Common myeloid progenitor, CD34-positive (primary cell): ENCODE measurements at regions of chr14 and their contacts with region 1.

Region 1: DNA sequence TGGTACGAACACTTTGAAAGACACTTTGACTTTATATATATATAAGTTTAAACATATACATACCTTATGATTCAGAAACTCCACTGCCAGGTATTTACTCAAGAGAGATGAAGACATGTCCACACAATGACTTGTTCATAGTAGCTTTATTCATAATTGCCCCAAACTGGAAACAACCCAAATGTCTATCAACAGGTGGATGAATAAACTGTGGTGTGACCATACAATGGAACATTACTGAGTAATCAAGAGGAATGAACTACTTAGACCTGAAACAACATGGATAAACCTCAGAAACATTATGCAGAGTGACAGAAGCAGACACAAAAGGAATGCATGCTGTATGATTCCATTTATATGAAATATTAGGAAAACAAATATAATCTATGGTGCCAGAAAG is 71.1 kb downstream of the PPP1R36 start:
- DNase-seq: no peak
- H3K4me3 ChIP-seq: no peak overlapping the region
- H3K27ac ChIP-seq: no peak overlapping the region
- H3K4me1 ChIP-seq: peaks cover 0 to 4% (median 0%) of the 10 kb centered on the region in 4 experiments
- H3K27me3 ChIP-seq: no peaks in the 10 kb centered on the region

Region 2: DNA sequence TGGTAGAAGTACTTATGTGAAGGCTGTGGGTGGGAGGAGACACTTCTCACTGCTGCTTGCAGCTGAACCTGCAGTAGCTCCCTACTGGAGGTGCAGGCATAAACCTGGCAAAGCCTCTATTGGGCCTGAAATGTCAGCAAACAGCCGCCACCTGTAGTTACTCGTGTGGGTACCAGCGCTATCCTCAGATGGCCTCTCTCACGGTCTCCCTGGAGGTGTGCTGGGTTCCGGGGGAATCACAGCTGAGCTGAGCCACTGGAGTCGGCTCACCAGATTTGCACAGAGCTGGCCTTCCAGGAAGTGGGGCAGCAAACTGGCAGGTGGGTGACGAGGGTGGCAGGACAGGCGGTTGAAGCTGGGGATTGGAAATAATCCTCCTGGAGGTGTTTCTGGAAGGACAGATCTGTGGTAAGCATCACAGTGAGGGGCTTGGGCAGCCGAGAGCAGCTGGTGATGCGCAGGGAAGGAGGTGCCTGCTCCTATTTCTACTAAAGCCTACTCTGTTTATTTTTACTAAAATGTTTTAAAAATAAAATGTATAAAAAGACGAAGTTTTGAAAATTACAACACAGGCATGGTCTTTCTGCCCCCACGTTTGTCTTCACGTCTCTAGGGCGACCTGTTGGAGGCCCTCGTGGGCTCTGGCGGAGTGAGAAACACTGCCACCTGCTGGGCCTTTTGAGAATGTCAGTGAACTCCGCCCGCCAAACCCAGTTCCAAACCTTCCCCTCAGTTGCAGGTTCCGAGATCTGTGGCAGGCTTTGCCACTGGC is 15.5 kb after region 1 on chr14:
- CTCF ChIA-PET with region 1: interaction called, 19 read pairs
- POLR2A ChIA-PET with region 1: no interaction called
- DNase-seq: peak; percentile 71 to 80 (median 72)
- H3K4me3 ChIP-seq: no peak overlapping the region
- H3K27ac ChIP-seq: no peak overlapping the region
- H3K4me1 ChIP-seq: peaks cover 0 to 6% (median 2%) of the 10 kb centered on the region in 4 experiments
- H3K27me3 ChIP-seq: no peaks in the 10 kb centered on the region